Activated naive CD4-positive, alpha-beta T cell treated with anti-CD3 and anti-CD28 coated beads for 36 hours (primary cell): ENCODE measurements at regions of chr1 and their contacts with region 1.

Region 1: GRCh38 chr1:38026592-38027200 is 14.2 kb downstream of the UTP11 start:
- DNase-seq: peak; percentile 80
- H3K4me3 Mint-ChIP-seq: no peak overlapping the region
- H3K27ac Mint-ChIP-seq: no peak overlapping the region
- H3K4me1 Mint-ChIP-seq: peaks cover 52% of the 10 kb centered on the region
- H3K27me3 Mint-ChIP-seq: no peaks in the 10 kb centered on the region

Region 2: GRCh38 chr1:38012363-38013226 is 14.1 kb before region 1 on chr1 and contains the start of gene UTP11:
- CTCF ChIA-PET with region 1: interaction called, 57 read pairs
- intact Hi-C with region 1: loop called (anchors 1 kb)
- DNase-seq: peak; percentile 96
- H3K4me3 Mint-ChIP-seq: peak within 1 kb of the TSS; percentile 98
- H3K27ac Mint-ChIP-seq: peak within 1 kb of the TSS; percentile 95
- H3K4me1 Mint-ChIP-seq: peaks cover 55% of the 10 kb centered on the region
- H3K27me3 Mint-ChIP-seq: no peaks in the 10 kb centered on the region
- total RNA-seq, gene UTP11: 49.7 to 49.8 TPM

Region 3: GRCh38 chr1:38071312-38072256 is 44.9 kb after region 1 on chr1:
- CTCF ChIA-PET with region 1: interaction called, 39 read pairs
- intact Hi-C with region 1: loop called (anchors 1 kb)
- DNase-seq: no peak
- H3K4me3 Mint-ChIP-seq: no peak overlapping the region
- H3K27ac Mint-ChIP-seq: no peak overlapping the region
- H3K4me1 Mint-ChIP-seq: no peaks in the 10 kb centered on the region
- H3K27me3 Mint-ChIP-seq: peaks cover 41% of the 10 kb centered on the region

Region 4: DNA sequence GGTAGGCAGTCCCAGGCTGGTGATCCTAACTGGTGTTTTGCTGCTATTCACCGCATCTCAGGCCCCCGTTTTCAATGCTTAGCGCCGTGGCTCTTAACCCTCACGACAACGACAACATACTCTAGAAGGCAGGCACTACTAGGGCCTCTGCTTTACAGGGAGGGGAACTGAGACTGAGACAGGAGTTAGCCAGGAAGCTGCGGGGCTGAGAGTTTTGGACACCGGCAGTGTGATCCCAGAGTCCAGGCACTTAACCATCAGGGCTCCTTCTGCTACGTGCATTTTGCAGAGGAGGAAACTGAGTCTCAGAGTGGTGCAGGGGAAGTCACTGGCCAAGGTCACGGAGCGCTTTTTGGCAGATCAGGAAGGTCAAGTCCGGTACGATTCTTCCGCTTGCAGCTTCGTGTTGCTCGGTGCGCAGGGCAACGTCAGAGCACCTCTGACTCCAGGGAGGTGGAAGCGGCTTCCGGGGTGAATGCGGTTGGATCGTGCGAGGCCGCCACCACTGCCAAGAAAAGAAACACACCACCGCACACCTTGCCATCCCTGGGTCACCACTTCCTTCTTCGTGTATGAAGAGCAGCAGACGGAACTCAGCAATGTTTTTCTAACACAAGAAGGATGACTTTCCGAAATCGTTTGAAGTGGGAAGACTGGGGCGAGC is 532.6 kb after region 1 on chr1:
- CTCF ChIA-PET with region 1: interaction called, 4 read pairs
- intact Hi-C with region 1: loop called (anchors 1 kb)
- DNase-seq: peak; percentile 93
- H3K4me3 Mint-ChIP-seq: peak overlapping the region; percentile 64
- H3K27ac Mint-ChIP-seq: peak overlapping the region; percentile 81
- H3K4me1 Mint-ChIP-seq: peaks cover 68% of the 10 kb centered on the region
- H3K27me3 Mint-ChIP-seq: peaks cover 26% of the 10 kb centered on the region

Region 5: DNA sequence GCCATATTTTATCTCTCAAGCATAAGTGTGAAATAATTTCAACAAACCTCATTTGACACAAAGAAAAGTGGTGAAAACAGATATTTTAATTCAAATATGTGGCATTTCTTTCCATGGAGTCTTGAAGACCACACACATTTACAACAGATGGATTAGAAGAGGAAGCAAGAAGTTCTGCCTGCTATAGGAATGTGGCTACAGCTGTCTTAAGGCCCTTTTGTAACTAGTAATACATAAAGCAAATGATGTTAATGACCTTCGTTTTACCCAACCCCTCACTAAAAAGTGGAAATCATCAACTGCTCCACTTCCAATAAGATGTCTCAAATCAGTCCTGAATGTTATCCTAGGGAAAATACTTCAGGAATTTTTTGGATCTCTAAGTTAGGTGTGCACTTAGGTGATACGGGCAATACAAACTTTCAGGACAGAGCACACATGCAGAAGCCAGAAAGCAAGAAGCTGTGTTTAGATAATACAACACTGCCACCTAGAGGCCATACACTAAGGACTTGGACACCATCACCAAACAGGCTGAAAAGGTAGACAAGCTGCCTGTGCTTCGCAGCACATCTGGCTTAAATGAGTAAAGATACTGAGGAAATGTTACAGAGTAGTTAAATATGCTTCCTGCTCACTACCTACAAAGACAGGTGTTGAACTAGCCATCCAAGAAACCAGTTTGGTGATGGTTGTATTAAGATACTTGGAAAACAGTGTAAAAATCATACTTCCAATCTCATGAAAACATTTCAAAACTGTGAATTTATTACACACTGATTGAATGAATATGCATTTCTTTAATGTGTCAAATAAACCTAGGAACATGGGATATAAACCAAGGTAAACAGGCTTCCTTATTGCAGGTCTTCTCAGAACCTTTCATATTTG is 808.5 kb after region 1 on chr1:
- CTCF ChIA-PET with region 1: interaction called, 6 read pairs
- intact Hi-C with region 1: loop called (anchors 1 kb)
- DNase-seq: peak; percentile 63
- H3K4me3 Mint-ChIP-seq: no peak overlapping the region
- H3K27ac Mint-ChIP-seq: no peak overlapping the region
- H3K4me1 Mint-ChIP-seq: no peaks in the 10 kb centered on the region
- H3K27me3 Mint-ChIP-seq: peaks cover 14% of the 10 kb centered on the region